Posterior vena cava (tissue), 2 donors: ENCODE measurements at regions of chr2 and their contacts with region 1.

Region 1: DNA sequence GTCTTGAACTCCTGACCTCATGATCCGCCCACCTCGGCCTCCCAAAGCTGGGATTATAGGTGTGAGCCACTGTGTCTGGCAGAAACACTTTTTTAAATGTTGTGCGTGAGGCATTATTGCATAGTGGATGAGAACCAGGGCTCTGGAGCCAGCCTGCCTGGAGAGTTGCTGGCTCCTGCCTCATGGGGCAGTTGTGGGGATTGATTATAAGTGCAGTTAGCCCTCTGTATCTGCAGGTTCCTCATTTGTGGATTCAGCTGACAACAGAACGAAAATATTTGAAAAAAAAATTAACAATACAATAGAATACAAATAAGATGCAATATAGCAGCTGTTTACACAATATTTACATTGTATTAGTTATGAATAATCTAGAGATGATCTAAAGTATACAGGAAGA is 129.4 kb upstream of the EML6 start:
- DNase-seq: no peak

Region 2: GRCh38 chr2:54545702-54546450 is 48.2 kb before region 1 on chr2:
- intact Hi-C with region 1: loop called in 1 of 2 experiments (anchors 1 kb)
- DNase-seq: no peak

Region 3: GRCh38 chr2:54558188-54559005 is 35.7 kb before region 1 on chr2:
- intact Hi-C with region 1: no loop called
- DNase-seq: peak; percentile 89